Psoas muscle (tissue), 8 donors: ENCODE measurements at regions of chr7 and their contacts with region 1.

Region 1: GRCh38 chr7:95045236-95045923 is 138.0 kb downstream of the PPP1R9A start:
- DNase-seq: no peak
- ATAC-seq: no peak
- H3K4me3 ChIP-seq: no peak overlapping the region
- H3K27ac ChIP-seq: no peak overlapping the region
- H3K4me1 ChIP-seq: no peaks in the 10 kb centered on the region
- H3K27me3 ChIP-seq: no peaks in the 10 kb centered on the region
- CTCF ChIP-seq: peak; percentile 10

Region 2: DNA sequence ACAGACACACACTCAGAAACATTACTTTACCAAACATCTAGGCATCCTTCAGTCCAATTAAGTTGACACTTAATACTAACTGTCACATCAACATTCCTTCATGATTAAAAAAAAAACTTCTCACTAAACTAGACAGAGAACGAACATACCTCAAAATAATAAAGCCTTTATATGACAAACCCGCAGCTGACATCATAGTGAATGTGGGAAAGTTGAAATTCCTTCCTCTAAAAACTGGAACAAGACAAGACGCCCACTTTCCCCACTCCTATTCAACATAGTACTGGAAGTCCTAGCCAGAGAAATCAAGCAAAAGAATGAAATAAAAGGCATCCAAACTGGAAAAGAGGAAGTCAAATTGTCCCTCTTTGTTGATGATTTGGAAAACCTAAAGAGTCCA is 234.9 kb before region 1 on chr7:
- intact Hi-C with region 1: loop called in 1 of 2 experiments (anchors 5 kb)
- DNase-seq: no peak
- ATAC-seq: no peak
- H3K4me3 ChIP-seq: no peak overlapping the region
- H3K27ac ChIP-seq: no peak overlapping the region
- H3K4me1 ChIP-seq: no peaks in the 10 kb centered on the region
- H3K27me3 ChIP-seq: no peaks in the 10 kb centered on the region
- CTCF ChIP-seq: no peak